ENCODE measurements at regions of chr1 and their contacts with region 1.

Region 1: DNA sequence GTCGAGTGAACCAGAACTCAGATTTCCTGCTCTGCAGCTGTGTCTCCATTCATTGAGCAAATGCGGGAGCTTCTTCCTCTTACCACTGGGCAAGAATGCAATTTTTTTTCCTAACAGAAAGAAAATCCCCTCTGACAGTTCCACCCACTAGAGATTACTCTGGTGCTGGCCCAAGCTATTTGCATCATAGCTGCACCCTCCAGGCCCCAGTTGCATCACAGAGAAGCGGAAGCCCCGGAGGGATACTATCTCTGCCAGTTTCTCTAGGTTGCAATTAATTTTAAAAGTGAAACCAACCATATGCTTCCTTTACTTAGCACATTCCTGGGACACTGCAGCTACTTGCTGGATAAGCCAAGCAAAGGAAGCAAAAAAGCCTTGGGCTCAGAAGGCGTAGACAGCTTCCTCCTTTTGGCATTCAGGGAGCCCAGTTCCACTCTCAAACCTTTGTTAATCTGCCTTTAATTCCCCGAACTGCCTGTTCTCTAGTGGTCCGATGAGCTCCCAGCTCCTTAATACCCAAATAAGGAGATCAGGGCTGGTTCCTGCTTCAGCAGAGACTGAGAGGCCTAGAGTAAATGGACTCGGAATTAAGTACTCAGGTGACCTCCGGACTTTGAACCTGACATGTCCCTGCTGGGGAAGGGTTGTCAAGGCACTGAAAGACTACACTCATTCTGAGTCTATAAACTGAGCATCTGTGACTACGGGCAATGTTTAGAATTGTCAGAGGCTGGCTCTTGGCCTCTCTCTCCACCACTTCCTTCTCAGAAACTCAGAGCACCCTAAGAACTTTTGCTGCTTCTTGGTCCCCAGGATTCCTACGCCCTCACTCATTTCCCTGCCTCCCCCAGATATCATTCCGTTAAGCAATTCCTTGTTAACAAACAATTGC is 72.5 kb upstream of the TNFSF18 start:
- DNase-seq: peak; percentile 69
- H3K4me3 ChIP-seq: no peak overlapping the region
- H3K27ac ChIP-seq: peak overlapping the region; percentile 54
- H3K4me1 ChIP-seq: peaks cover 15% of the 10 kb centered on the region
- H3K27me3 ChIP-seq: no peaks in the 10 kb centered on the region
- CTCF ChIP-seq: no peak

Region 2: GRCh38 chr1:173056380-173056779 is 66.8 kb before region 1 on chr1:
- CTCF ChIA-PET with region 1: no interaction called
- POLR2A ChIA-PET with region 1: no interaction called
- intact Hi-C with region 1: loop called (anchors 1 kb)
- DNase-seq: peak; percentile 56 to 94
- H3K4me3 ChIP-seq: no peak overlapping the region
- H3K27ac ChIP-seq: peak overlapping the region; percentile 64
- H3K4me1 ChIP-seq: peaks cover 39% of the 10 kb centered on the region
- H3K27me3 ChIP-seq: no peaks in the 10 kb centered on the region
- CTCF ChIP-seq: no peak

Region 3: DNA sequence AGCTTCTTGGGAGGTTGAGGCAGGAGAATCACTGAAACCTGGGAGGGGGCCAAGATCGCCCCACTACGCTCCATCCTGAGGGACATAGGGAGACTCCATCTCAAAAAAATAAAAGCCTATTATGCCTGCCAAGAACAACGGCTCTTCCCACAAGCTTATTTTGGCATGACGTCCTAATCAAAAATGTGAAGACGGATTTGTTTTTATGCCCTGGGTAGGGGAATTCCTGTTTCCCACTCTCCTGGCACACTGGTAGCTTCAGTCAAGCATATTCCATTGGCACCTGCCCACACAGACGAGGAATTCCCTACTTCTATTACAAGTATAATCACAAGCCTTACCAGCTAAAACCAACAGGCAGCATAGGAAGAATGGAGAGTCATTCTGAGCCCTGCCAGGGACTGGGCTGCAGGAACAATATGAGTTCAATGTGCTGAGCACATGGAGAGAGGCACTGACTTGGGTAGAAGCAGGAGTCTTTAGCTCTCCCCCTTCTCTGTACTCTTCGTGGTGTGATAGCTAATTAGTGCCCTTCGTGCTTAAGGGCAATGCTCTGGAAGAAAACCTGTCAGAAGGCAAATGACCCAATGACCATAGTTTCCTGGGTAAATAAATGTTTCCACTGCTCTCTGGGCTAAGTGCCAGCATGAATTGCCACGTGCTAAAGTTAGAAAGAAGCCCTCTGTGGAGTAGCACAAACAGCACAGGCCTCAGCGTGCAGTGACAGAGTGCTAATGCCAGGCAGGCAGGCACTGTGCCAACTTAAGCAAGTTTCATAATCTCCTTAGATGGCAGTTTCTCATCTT is 67.1 kb after region 1 on chr1:
- CTCF ChIA-PET with region 1: no interaction called
- POLR2A ChIA-PET with region 1: interaction called, 11 read pairs
- intact Hi-C with region 1: loop called (anchors 10 kb)
- DNase-seq: peak; percentile 77 to 80
- H3K4me3 ChIP-seq: no peak overlapping the region
- H3K27ac ChIP-seq: no peak overlapping the region
- H3K4me1 ChIP-seq: peaks cover 11% of the 10 kb centered on the region; the same call in 1 of the 2 replicates
- H3K27me3 ChIP-seq: no peaks in the 10 kb centered on the region
- CTCF ChIP-seq: no peak

Measured in PC-9 (cell line).